CD8-positive, alpha-beta T cell (primary cell): ENCODE measurements at regions of chr1 and their contacts with region 1.

Region 1: GRCh38 chr1:45583264-45583665 is 576 bp upstream of the NASP start:
- DNase-seq: peak; percentile 85 to 98 (median 93)
- ATAC-seq: peak; percentile 72
- H3K4me3 ChIP-seq: peak overlapping the region; percentile 82 to 98
- H3K4me3 Mint-ChIP-seq: peak overlapping the region; percentile 92
- H3K27ac ChIP-seq: peak overlapping the region; percentile 86 to 89
- H3K27ac Mint-ChIP-seq: peak overlapping the region; percentile 98
- H3K4me1 ChIP-seq: peaks cover 23% of the 10 kb centered on the region
- H3K4me1 Mint-ChIP-seq: peaks cover 27% of the 10 kb centered on the region
- H3K27me3 ChIP-seq: no peaks in the 10 kb centered on the region
- H3K27me3 Mint-ChIP-seq: no peaks in the 10 kb centered on the region
- CTCF ChIP-seq: no peak

Region 2: GRCh38 chr1:44739361-44740178 is 843.7 kb before region 1 on chr1 and contains the start of gene KIF2C:
- CTCF ChIA-PET with region 1: no interaction called
- POLR2A ChIA-PET with region 1: no interaction called
- intact Hi-C with region 1: loop called (anchors 5 to 10 kb)
- DNase-seq: peak; percentile 93 to 98 (median 96)
- ATAC-seq: peak; percentile 100
- H3K4me3 ChIP-seq: peak within 1 kb of the TSS; percentile 81 to 84
- H3K4me3 Mint-ChIP-seq: peak within 1 kb of the TSS; percentile 93
- H3K27ac ChIP-seq: peak within 1 kb of the TSS; percentile 69 to 88
- H3K27ac Mint-ChIP-seq: peak within 1 kb of the TSS; percentile 97
- H3K4me1 ChIP-seq: peaks cover 12% of the 10 kb centered on the region
- H3K4me1 Mint-ChIP-seq: peaks cover 17% of the 10 kb centered on the region
- H3K27me3 ChIP-seq: no peaks in the 10 kb centered on the region
- H3K27me3 Mint-ChIP-seq: no peaks in the 10 kb centered on the region
- CTCF ChIP-seq: no peak
- total RNA-seq, gene KIF2C: 0.58 to 0.81 TPM

Region 3: DNA sequence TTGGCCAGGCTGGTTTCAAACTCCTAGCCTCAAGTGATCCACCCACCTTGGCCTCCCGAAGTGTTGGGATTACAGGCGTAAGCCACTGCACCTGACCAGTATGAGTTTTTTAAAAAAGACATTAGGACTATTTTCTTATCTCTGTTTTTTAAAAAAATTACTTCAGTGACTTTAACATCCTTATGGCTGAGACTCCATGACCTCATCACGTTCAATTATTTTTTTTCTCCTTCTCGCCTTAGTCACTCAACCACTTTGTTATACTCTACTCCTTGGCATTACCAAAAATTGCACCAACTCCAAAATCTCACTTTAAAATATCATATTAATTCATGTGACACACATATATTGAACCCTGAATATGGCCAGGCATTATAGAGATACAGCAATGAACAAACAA is 632.4 kb before region 1 on chr1:
- CTCF ChIA-PET with region 1: no interaction called
- POLR2A ChIA-PET with region 1: no interaction called
- intact Hi-C with region 1: no loop called
- DNase-seq: no peak
- ATAC-seq: no peak
- H3K4me3 ChIP-seq: no peak overlapping the region
- H3K4me3 Mint-ChIP-seq: no peak overlapping the region
- H3K27ac ChIP-seq: no peak overlapping the region
- H3K27ac Mint-ChIP-seq: no peak overlapping the region
- H3K4me1 ChIP-seq: peaks cover 3% of the 10 kb centered on the region
- H3K4me1 Mint-ChIP-seq: peaks cover 13% of the 10 kb centered on the region
- H3K27me3 ChIP-seq: no peaks in the 10 kb centered on the region
- H3K27me3 Mint-ChIP-seq: no peaks in the 10 kb centered on the region
- CTCF ChIP-seq: no peak

Region 4: DNA sequence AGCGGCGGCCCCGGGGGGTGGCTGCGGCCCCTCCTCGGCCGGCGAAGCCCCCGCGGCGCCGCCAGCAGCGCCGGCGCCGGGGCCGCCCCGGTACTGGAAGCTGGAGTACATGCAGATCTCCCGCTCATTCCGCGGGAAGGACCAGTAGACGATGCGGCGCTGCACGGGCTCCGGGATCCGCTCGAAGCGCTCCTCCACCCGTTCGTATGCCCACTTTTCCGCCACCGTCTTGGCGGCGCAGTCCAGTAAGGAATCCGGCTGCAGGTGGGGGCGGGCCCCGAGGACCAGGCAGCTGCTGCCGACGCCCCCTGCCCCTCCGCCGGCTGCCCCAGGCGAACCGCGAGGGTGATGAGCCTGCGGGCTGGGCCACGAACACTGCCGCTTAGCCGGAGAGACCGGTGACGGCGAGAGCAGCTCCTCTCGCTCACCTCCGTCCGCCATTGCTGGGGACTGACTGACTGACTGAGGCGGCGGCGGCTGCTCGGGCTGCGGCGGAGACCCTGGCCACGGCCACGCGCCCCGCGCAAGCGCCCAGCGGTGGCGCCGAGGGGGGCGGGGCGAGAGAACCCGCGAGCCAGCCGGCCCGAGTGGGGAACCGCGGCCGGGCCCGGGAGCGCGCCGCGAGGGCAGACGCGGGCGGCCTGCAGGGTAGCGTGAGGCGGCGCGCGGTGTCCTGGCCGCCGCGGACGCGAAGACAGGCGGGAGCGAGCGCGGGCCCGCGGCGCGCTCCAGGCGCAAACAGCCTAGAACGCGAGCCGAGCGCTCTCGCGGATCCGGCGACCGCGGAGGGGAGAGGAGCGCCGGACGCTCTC is 377.1 kb before region 1 on chr1 and contains the start of gene ZSWIM5:
- CTCF ChIA-PET with region 1: no interaction called
- POLR2A ChIA-PET with region 1: no interaction called
- intact Hi-C with region 1: loop called in 1 of 2 experiments (anchors 5 kb)
- DNase-seq: peak; percentile 34 to 84 (median 61)
- ATAC-seq: peak; percentile 77
- H3K4me3 ChIP-seq: peak within 1 kb of the TSS; percentile 62 to 80
- H3K4me3 Mint-ChIP-seq: peak within 1 kb of the TSS; percentile 92
- H3K27ac ChIP-seq: peak within 1 kb of the TSS; percentile 34 to 37
- H3K27ac Mint-ChIP-seq: peak within 1 kb of the TSS; percentile 80
- H3K4me1 ChIP-seq: peaks cover 32% of the 10 kb centered on the region
- H3K4me1 Mint-ChIP-seq: peaks cover 33% of the 10 kb centered on the region
- H3K27me3 ChIP-seq: no peaks in the 10 kb centered on the region
- H3K27me3 Mint-ChIP-seq: peaks cover 8% of the 10 kb centered on the region
- CTCF ChIP-seq: no peak
- total RNA-seq, gene ZSWIM5: 1.0 to 1.8 TPM

Region 5: GRCh38 chr1:45499415-45499769 is 83.9 kb before region 1 on chr1:
- CTCF ChIA-PET with region 1: interaction called, 6 read pairs
- POLR2A ChIA-PET with region 1: interaction called, 18 read pairs
- intact Hi-C with region 1: loop called in 1 of 2 experiments (anchors 1 kb)
- DNase-seq: peak in 1 of 9 experiments; percentile 55
- ATAC-seq: no peak
- H3K4me3 ChIP-seq: peak overlapping the region; percentile 59 to 83
- H3K4me3 Mint-ChIP-seq: peak overlapping the region; percentile 93
- H3K27ac ChIP-seq: peak overlapping the region; percentile 39 to 76
- H3K27ac Mint-ChIP-seq: peak overlapping the region; percentile 90
- H3K4me1 ChIP-seq: peaks cover 20% of the 10 kb centered on the region
- H3K4me1 Mint-ChIP-seq: peaks cover 37% of the 10 kb centered on the region
- H3K27me3 ChIP-seq: no peaks in the 10 kb centered on the region
- H3K27me3 Mint-ChIP-seq: no peaks in the 10 kb centered on the region
- CTCF ChIP-seq: no peak

Region 6: GRCh38 chr1:45569962-45570581 is 13.2 kb before region 1 on chr1:
- CTCF ChIA-PET with region 1: interaction called, 52 read pairs
- POLR2A ChIA-PET with region 1: no interaction called
- intact Hi-C with region 1: no loop called
- DNase-seq: peak; percentile 33 to 83 (median 72)
- ATAC-seq: peak; percentile 99
- H3K4me3 ChIP-seq: no peak overlapping the region
- H3K4me3 Mint-ChIP-seq: no peak overlapping the region
- H3K27ac ChIP-seq: no peak overlapping the region
- H3K27ac Mint-ChIP-seq: peak overlapping the region; percentile 22
- H3K4me1 ChIP-seq: no peaks in the 10 kb centered on the region
- H3K4me1 Mint-ChIP-seq: no peaks in the 10 kb centered on the region
- H3K27me3 ChIP-seq: no peaks in the 10 kb centered on the region
- H3K27me3 Mint-ChIP-seq: no peaks in the 10 kb centered on the region
- CTCF ChIP-seq: peak; percentile 92

Region 7: GRCh38 chr1:45750298-45751038 is 167.2 kb after region 1 on chr1 and contains the start of gene IPP:
- CTCF ChIA-PET with region 1: no interaction called
- POLR2A ChIA-PET with region 1: no interaction called
- intact Hi-C with region 1: loop called (anchors 2 to 5 kb)
- DNase-seq: peak; percentile 73 to 97 (median 90)
- ATAC-seq: peak; percentile 90
- H3K4me3 ChIP-seq: peak within 1 kb of the TSS; percentile 82 to 90
- H3K4me3 Mint-ChIP-seq: peak within 1 kb of the TSS; percentile 97
- H3K27ac ChIP-seq: peak within 1 kb of the TSS; percentile 83 to 99
- H3K27ac Mint-ChIP-seq: peak within 1 kb of the TSS; percentile 100
- H3K4me1 ChIP-seq: peaks cover 17% of the 10 kb centered on the region
- H3K4me1 Mint-ChIP-seq: peaks cover 41% of the 10 kb centered on the region
- H3K27me3 ChIP-seq: no peaks in the 10 kb centered on the region
- H3K27me3 Mint-ChIP-seq: no peaks in the 10 kb centered on the region
- CTCF ChIP-seq: no peak
- total RNA-seq, gene IPP: 4.9 to 5.6 TPM